ENCODE measurements at regions of chr14 and their contacts with region 1.

Region 1: DNA sequence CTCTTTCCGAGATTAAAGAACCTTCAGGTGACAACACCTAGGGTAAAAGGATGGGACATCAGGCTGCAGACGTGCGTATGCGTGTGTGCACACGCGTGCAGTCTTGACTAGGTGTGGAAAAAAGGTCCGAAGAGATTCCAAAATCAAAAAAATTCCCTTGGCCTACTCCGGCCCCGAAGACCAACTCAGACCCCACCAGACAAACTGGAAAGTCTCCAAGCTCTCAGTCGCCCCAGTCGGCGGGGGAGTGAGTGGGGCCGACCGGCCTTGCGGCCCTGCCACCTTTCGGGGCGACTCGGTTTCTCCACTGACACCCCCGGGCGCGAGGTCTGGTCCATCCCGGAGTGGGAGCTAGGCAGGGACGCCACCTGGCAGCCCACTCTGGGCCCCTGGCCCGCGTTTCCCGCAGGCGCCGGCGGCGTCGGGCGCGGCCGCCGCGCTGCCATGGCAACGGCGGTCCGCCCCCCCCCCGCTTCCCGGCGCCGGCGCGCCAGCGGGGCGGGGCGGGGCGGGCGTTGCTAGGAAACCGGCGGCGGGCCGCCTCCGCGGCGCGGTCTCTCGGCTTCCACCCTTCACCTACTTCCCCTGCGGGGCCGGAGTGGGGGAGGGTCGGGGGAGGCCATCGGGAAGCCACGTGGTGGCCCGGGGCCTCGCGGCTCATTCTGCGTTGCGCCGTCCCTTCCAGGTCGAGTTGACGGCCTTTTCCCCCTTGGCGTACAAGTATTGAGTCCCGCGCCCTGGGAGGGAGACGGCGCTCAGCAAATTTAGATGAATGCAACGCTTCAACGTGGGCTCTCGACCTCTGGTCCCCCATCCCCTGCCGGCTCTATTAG is 253.1 kb downstream of the EFCAB11 start:
- DNase-seq: peak; percentile 92
- H3K4me3 ChIP-seq: peak overlapping the region; percentile 45 to 62 (median 56)
- H3K27ac ChIP-seq: peak overlapping the region; percentile 64 to 83 (median 76)
- H3K4me1 ChIP-seq: peaks cover 0 to 19% (median 16%) of the 10 kb centered on the region in 4 donors
- H3K27me3 ChIP-seq: no peaks in the 10 kb centered on the region
- CTCF ChIP-seq: no peak
- EP300 ChIP-seq: peak in 2 of 4 donors; percentile 44 to 53
- POLR2A ChIP-seq: no peak

Region 2: DNA sequence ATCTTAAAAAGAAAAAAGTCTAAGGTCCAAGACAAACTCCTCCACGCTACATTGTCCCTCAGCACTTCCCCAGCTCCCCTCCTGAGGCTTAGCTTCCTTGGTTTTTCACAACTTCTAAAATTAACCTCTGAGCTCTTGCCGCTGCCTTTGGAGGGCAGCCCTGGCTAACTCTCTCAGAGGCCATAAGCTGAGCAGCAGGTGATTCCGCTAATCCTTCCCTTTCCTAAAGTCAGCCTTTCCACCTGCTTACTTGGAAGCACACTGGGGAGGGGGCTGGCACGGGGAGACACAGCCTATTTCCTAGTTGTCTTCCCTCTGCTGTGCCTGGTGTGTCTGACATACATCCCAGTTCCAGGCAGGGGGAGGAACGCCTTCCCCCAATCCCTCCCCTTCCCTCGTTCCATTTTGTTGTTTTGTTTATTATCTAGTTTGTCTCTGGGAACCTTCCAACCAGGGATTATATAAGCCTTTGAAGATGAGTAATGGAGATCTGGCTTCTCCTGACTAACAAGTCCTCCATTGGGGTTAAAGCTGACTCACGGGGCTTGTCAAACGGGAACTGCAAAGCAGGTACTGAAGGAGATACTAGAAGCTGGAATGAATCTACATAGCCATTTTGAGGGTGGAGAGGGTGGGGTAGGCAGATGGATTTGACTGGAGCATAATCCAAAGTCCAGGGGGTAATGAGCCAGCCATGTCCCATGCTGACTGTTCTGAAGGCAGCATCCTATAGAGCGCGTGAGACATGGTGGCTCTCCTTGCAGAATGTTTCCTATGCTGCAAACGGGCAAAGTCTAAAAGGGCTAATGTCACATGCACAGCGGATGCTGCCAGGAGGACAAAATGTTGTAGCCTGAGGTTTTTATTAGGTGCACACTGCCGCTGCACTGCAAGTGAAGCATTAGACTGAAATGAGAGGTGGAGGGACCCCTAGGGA is 515.2 kb before region 1 on chr14:
- intact Hi-C with region 1: loop called (anchors 10 kb)
- DNase-seq: no peak
- H3K4me3 ChIP-seq: no peak overlapping the region
- H3K27ac ChIP-seq: peak overlapping the region in 2 of 4 donors; percentile 6 to 22
- H3K4me1 ChIP-seq: peaks cover 0 to 22% (median 18%) of the 10 kb centered on the region in 4 donors
- H3K27me3 ChIP-seq: no peaks in the 10 kb centered on the region
- CTCF ChIP-seq: no peak
- EP300 ChIP-seq: no peak
- POLR2A ChIP-seq: no peak

Region 3: GRCh38 chr14:89303457-89304435 is 397.7 kb before region 1 on chr14:
- intact Hi-C with region 1: loop called (anchors 5 kb)
- DNase-seq: peak; percentile 91
- H3K4me3 ChIP-seq: peak overlapping the region; percentile 1 to 28 (median 20)
- H3K27ac ChIP-seq: peak overlapping the region; percentile 87 to 95 (median 90)
- H3K4me1 ChIP-seq: peaks cover 0 to 53% (median 45%) of the 10 kb centered on the region in 4 donors
- H3K27me3 ChIP-seq: no peaks in the 10 kb centered on the region
- CTCF ChIP-seq: no peak
- EP300 ChIP-seq: peak; percentile 81 to 98 (median 86)
- POLR2A ChIP-seq: no peak

Region 4: GRCh38 chr14:89618811-89619551 is 82.4 kb before region 1 on chr14:
- intact Hi-C with region 1: loop called (anchors 5 kb)
- DNase-seq: peak; percentile 76
- H3K4me3 ChIP-seq: peak overlapping the region; percentile 55 to 85 (median 68)
- H3K27ac ChIP-seq: peak overlapping the region; percentile 70 to 84 (median 76)
- H3K4me1 ChIP-seq: peaks cover 0 to 28% (median 13%) of the 10 kb centered on the region in 4 donors
- H3K27me3 ChIP-seq: no peaks in the 10 kb centered on the region
- CTCF ChIP-seq: no peak
- EP300 ChIP-seq: no peak
- POLR2A ChIP-seq: no peak

Region 5: GRCh38 chr14:89767861-89768268 is 66.4 kb after region 1 on chr14:
- intact Hi-C with region 1: no loop called
- DNase-seq: no peak
- H3K4me3 ChIP-seq: no peak overlapping the region
- H3K27ac ChIP-seq: no peak overlapping the region
- H3K4me1 ChIP-seq: no peaks in the 10 kb centered on the region
- H3K27me3 ChIP-seq: no peaks in the 10 kb centered on the region
- CTCF ChIP-seq: peak in 2 of 4 experiments; percentile 19 to 29
- EP300 ChIP-seq: no peak
- POLR2A ChIP-seq: no peak

Measured in sigmoid colon (tissue), 7 donors.